ENCODE measurements at regions of chr7 and their contacts with region 1.

Region 1: DNA sequence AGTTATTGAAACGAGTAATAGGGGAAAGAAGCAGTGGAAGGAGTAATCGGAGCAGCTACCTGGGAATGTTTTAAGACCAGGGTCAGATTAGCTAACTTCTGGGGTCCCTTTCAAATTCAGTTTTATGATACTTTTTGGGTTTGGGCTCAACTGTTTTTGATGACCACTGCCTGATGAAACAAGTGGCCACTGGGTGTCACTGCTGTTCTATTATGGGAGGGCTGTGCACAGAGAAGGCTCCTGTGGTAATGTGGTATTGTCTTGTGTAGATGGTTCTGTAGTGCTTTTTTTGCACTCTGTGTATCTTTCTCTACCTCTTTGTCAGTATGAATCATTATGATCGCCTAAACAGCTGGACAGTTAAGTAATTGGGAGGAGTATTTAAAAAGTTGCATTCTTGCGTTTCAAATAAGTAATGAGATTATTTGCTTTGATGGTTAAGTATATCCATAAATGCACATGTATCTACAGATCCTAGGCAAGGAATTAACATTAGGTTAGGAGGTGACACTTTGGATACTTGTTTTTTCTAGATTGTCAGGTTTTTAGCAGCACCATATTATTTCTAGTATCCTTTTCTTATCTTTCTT is 128.4 kb downstream of the ABCA13 start:
- DNase-seq: peak in 1 of 2 experiments; percentile 69
- H3K4me3 ChIP-seq: no peak overlapping the region
- H3K27ac ChIP-seq: no peak overlapping the region
- H3K4me1 ChIP-seq: peaks cover 0 to 8% (median 5%) of the 10 kb centered on the region in 4 experiments; a peak in 4 of 7 replicates
- H3K27me3 ChIP-seq: no peaks in the 10 kb centered on the region
- CTCF ChIP-seq: peak; percentile 44 to 79 (median 62)
- EP300 ChIP-seq: no peak
- POLR2A ChIP-seq: no peak
- RAD21 ChIP-seq: peak; percentile 91

Region 2: GRCh38 chr7:48089046-48090003 is 210.3 kb before region 1 on chr7 and contains the start of gene UPP1:
- CTCF ChIA-PET with region 1: no interaction called
- POLR2A ChIA-PET with region 1: no interaction called
- DNase-seq: peak in 1 of 2 experiments; percentile 90
- H3K4me3 ChIP-seq: peak within 1 kb of the TSS; percentile 64 to 85 (median 80)
- H3K27ac ChIP-seq: peak within 1 kb of the TSS; percentile 70
- H3K4me1 ChIP-seq: peaks cover 5 to 11% (median 7%) of the 10 kb centered on the region in 4 experiments
- H3K27me3 ChIP-seq: no peaks in the 10 kb centered on the region
- CTCF ChIP-seq: no peak
- EP300 ChIP-seq: no peak
- POLR2A ChIP-seq: peak; percentile 77 to 79
- RAD21 ChIP-seq: peak in 1 of 2 experiments; percentile 19; a peak in 1 of 4 replicates
- total RNA-seq, gene UPP1: 37.5 and 40.7 TPM in 2 replicates

Region 3: DNA sequence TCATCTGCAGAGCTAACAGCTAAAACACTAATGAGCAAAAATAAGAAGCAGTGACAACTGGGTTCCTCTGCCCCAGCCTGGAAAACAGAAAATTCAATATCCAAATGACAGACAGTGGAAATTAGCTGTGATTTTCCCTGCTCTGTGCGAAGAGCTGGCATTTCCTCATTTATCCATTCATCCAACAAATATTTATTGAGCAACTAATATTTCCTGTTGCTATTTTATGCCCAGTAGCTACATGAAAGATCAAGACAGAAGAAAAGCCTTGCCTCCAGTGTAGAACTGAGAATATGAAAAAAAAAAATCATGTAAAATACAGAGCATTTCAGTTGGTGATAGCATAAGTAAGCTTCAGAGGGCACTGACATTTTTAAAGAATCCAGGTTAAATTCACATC is 12.5 kb after region 1 on chr7:
- CTCF ChIA-PET with region 1: interaction called, 22 read pairs
- POLR2A ChIA-PET with region 1: no interaction called
- DNase-seq: no peak
- H3K4me3 ChIP-seq: no peak overlapping the region
- H3K27ac ChIP-seq: no peak overlapping the region
- H3K4me1 ChIP-seq: no peaks in the 10 kb centered on the region
- H3K27me3 ChIP-seq: no peaks in the 10 kb centered on the region
- CTCF ChIP-seq: no peak
- EP300 ChIP-seq: no peak
- POLR2A ChIP-seq: no peak
- RAD21 ChIP-seq: no peak

Region 4: GRCh38 chr7:48438206-48438605 is 138.5 kb after region 1 on chr7:
- CTCF ChIA-PET with region 1: no interaction called
- POLR2A ChIA-PET with region 1: no interaction called
- DNase-seq: no peak
- H3K4me3 ChIP-seq: no peak overlapping the region
- H3K27ac ChIP-seq: no peak overlapping the region
- H3K4me1 ChIP-seq: no peaks in the 10 kb centered on the region
- H3K27me3 ChIP-seq: no peaks in the 10 kb centered on the region
- CTCF ChIP-seq: no peak
- EP300 ChIP-seq: no peak
- POLR2A ChIP-seq: no peak
- RAD21 ChIP-seq: no peak

Region 5: GRCh38 chr7:48875045-48875916 is 575.6 kb after region 1 on chr7:
- CTCF ChIA-PET with region 1: interaction called, 14 read pairs
- POLR2A ChIA-PET with region 1: no interaction called
- DNase-seq: peak; percentile 36 to 56
- H3K4me3 ChIP-seq: no peak overlapping the region
- H3K27ac ChIP-seq: no peak overlapping the region
- H3K4me1 ChIP-seq: no peaks in the 10 kb centered on the region
- H3K27me3 ChIP-seq: no peaks in the 10 kb centered on the region
- CTCF ChIP-seq: peak; percentile 78 to 80 (median 79)
- EP300 ChIP-seq: no peak
- POLR2A ChIP-seq: no peak
- RAD21 ChIP-seq: peak; percentile 89 to 93

Measured in H1 (cell line).